ENCODE measurements at regions of chr11 and their contacts with region 1.

Region 1: DNA sequence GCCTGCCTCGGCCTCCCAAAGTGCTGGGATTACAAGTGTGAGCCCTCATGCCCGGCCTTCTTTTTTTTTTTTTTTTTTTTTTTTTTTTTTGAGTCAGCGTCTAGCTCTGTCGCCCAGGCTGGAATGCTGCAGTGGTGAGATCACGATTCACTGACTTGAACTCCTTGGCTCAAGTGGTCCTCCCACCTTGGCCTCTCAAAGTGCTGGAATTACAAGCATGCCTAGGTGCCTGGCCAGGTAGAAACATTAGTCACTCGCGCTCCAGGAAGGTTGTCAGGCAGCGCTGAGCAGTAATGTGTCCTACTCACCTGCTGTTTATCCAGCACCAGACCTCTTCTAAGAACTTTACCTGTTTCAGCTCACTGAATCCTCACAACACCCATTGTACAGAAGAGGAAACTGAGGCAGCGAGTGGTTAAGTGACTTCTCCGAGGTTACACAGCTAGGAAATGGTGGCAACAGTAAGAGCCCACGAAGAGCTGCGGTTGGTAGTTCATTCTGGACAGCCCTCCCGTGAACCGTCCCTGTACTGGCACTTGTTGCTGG is 496 bp upstream of the CST6 start:
- DNase-seq: peak; percentile 94 to 100
- H3K4me3 ChIP-seq: peak overlapping the region; percentile 52
- H3K27ac ChIP-seq: peak overlapping the region; percentile 66
- H3K4me1 ChIP-seq: peaks cover 64% of the 10 kb centered on the region
- H3K27me3 ChIP-seq: no peaks in the 10 kb centered on the region
- CTCF ChIP-seq: no peak

Region 2: GRCh38 chr11:65558002-65558931 is 453.0 kb before region 1 on chr11 and contains the start of gene LTBP3:
- CTCF ChIA-PET with region 1: no interaction called
- POLR2A ChIA-PET with region 1: no interaction called
- intact Hi-C with region 1: loop called (anchors 5 kb)
- DNase-seq: peak; percentile 71 to 92
- H3K4me3 ChIP-seq: peak within 1 kb of the TSS; percentile 77
- H3K27ac ChIP-seq: peak within 1 kb of the TSS; percentile 69
- H3K4me1 ChIP-seq: peaks cover 71% of the 10 kb centered on the region
- H3K27me3 ChIP-seq: no peaks in the 10 kb centered on the region
- CTCF ChIP-seq: no peak
- total RNA-seq, gene LTBP3: 455 and 553 TPM in 2 replicates

Region 3: GRCh38 chr11:65652511-65653231 is 358.6 kb before region 1 on chr11:
- CTCF ChIA-PET with region 1: no interaction called
- POLR2A ChIA-PET with region 1: no interaction called
- intact Hi-C with region 1: loop called (anchors 5 kb)
- DNase-seq: peak; percentile 82 to 98
- H3K4me3 ChIP-seq: peak overlapping the region; percentile 64
- H3K27ac ChIP-seq: peak overlapping the region; percentile 76
- H3K4me1 ChIP-seq: peaks cover 35% of the 10 kb centered on the region
- H3K27me3 ChIP-seq: no peaks in the 10 kb centered on the region
- CTCF ChIP-seq: no peak

Region 4: DNA sequence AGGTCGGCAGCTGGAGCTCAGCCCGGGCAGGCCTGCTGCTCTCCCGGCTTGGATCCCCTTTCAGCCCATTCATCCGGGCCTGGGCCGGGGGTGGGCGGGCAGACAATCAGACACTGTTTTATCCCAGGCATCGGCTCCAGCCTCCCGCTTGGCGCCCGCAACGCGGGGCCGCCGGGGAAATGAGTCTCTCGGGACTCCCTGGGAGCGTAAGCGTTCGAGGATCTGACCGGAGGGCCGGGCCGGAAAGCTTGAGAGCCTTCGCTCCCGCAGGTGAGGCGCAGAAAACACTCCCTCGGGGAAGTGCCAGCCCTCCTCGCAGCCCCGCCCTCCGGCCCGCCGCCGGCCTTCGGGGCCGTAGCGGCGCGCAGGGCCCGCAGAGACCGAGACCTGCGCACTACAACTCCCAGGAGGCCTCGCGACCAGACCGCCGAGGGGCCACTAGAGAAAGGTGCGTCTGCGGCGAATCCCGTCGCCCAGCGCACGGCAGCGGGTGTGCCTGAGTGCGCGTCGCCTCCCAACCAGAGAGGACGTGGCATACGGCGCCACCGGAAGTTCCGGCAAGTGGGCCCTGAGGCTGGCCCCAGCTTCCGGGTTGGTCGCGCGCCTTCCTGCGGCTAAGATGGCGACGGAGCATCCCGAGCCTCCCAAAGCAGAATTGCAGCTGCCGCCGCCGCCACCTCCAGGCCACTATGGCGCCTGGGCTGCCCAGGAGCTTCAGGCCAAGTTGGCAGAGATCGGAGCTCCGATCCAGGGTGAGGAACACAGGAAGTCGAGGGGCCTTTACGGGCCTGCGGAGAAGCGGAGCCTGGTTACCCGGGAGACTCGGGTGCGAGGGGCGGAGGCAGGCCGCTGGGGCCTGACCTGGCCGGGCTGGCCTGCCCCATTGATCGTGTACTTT is 40.7 kb after region 1 on chr11 and contains the start of gene SF3B2:
- CTCF ChIA-PET with region 1: interaction called, 9 read pairs
- POLR2A ChIA-PET with region 1: interaction called, 4 read pairs
- intact Hi-C with region 1: loop called (anchors 2 kb)
- DNase-seq: peak; percentile 98 to 99
- H3K4me3 ChIP-seq: peak within 1 kb of the TSS; percentile 99
- H3K27ac ChIP-seq: peak within 1 kb of the TSS; percentile 75
- H3K4me1 ChIP-seq: peaks cover 20% of the 10 kb centered on the region
- H3K27me3 ChIP-seq: no peaks in the 10 kb centered on the region
- CTCF ChIP-seq: no peak
- total RNA-seq, gene SF3B2: 221 and 224 TPM in 2 replicates

Region 5: GRCh38 chr11:66100272-66101065 is 89.2 kb after region 1 on chr11:
- CTCF ChIA-PET with region 1: no interaction called
- POLR2A ChIA-PET with region 1: no interaction called
- intact Hi-C with region 1: no loop called
- DNase-seq: no peak
- H3K4me3 ChIP-seq: no peak overlapping the region
- H3K27ac ChIP-seq: no peak overlapping the region
- H3K4me1 ChIP-seq: no peaks in the 10 kb centered on the region
- H3K27me3 ChIP-seq: no peaks in the 10 kb centered on the region
- CTCF ChIP-seq: no peak

Region 6: DNA sequence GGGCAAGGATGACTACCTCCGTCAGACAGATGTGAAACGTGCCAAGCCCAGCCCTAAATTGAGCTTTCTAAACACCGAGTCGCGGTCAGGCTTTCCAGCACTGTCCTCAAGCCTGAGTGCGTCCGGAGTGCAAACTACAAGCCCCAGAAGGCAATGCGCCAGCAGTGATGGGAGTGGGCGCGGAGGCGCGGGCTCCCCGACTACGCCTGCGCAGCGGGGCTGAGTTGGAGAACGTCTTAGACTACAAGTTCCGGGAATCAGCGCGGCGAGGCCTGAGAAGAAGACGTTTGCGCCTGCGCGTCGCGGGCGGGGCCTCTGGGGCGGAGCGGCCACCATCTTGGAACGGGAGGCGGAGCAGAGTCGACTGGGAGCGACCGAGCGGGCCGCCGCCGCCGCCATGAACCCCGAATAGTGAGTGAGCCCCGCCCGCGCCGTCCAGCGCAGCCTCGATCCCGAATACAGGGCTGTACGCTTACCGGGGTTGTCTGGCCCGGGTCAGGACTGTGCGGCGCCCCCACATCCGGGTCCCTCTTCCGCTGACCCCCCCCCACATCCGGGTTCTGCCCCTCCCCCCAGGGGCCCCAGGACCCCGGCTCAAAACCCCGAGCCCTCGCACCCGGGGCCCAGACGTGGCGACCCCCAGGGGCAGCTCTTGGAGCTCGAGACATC is 257.1 kb after region 1 on chr11 and contains the start of gene RAB1B:
- CTCF ChIA-PET with region 1: no interaction called
- POLR2A ChIA-PET with region 1: no interaction called
- intact Hi-C with region 1: loop called (anchors 5 kb)
- DNase-seq: peak; percentile 98 to 100
- H3K4me3 ChIP-seq: peak within 1 kb of the TSS; percentile 95
- H3K27ac ChIP-seq: peak within 1 kb of the TSS; percentile 57
- H3K4me1 ChIP-seq: peaks cover 8% of the 10 kb centered on the region
- H3K27me3 ChIP-seq: no peaks in the 10 kb centered on the region
- CTCF ChIP-seq: no peak
- total RNA-seq, gene RAB1B: 209 and 232 TPM in 2 replicates